ENCODE measurements at regions of chrX and their contacts with region 1.

Region 1: GRCh38 chrX:51860679-51861078 is 32.7 kb upstream of the MAGED1 start:
- DNase-seq: peak in 3 of 9 donors; percentile 2 to 3 (median 2)
- ATAC-seq: no peak
- H3K4me3 ChIP-seq: no peak overlapping the region
- H3K4me3 Mint-ChIP-seq: no peak overlapping the region
- H3K27ac ChIP-seq: no peak overlapping the region
- H3K27ac Mint-ChIP-seq: peak overlapping the region in 1 of 9 donors; percentile 23
- H3K4me1 ChIP-seq: no peaks in the 10 kb centered on the region
- H3K4me1 Mint-ChIP-seq: peaks cover 5 to 26% (median 11%) of the 10 kb centered on the region in 7 donors
- H3K27me3 ChIP-seq: no peaks in the 10 kb centered on the region
- H3K27me3 Mint-ChIP-seq: no peaks in the 10 kb centered on the region

Region 2: GRCh38 chrX:51487960-51488267 is 372.8 kb before region 1 on chrX:
- CTCF ChIA-PET with region 1: interaction called, 4 read pairs
- POLR2A ChIA-PET with region 1: no interaction called
- intact Hi-C with region 1: loop called in 1 of 2 experiments (anchors 5 kb)
- DNase-seq: no peak
- ATAC-seq: no peak
- H3K4me3 ChIP-seq: no peak overlapping the region
- H3K4me3 Mint-ChIP-seq: no peak overlapping the region
- H3K27ac ChIP-seq: no peak overlapping the region
- H3K27ac Mint-ChIP-seq: no peak overlapping the region
- H3K4me1 ChIP-seq: no peaks in the 10 kb centered on the region
- H3K4me1 Mint-ChIP-seq: no peaks in the 10 kb centered on the region
- H3K27me3 ChIP-seq: no peaks in the 10 kb centered on the region
- H3K27me3 Mint-ChIP-seq: no peaks in the 10 kb centered on the region

Region 3: DNA sequence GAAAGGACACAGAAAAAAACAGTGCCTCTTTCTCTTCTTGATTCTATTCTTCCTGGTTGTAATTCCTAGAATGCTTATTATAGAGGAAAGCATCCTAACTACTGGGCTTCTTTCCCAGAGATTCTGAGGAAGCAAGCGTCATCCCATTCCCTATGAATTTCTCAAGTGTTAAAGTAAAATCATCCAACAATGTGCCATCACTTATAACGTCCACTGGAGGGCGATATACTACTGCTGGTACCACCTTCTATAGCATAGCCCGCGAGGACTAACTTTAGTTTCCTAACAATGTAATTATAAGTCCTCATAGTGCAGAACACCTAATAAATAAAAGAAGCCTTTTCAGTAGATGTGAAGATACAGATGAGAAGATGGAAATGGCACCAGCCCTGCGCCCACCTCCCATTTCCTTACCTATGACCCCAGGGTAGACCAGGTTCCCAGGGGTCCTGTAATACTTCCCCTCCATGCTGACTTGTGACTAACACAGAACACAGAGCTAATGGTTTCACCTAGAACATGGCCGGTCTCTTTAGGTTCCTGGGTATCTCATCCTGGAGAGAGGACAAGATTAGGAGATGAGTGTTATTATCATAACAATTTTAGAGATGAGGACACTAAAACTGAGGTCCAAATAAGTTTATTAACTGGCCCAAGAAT is 246.2 kb before region 1 on chrX:
- CTCF ChIA-PET with region 1: no interaction called
- POLR2A ChIA-PET with region 1: no interaction called
- intact Hi-C with region 1: loop called in 1 of 2 experiments (anchors 2 kb)
- DNase-seq: peak in 5 of 9 donors; percentile 2 to 24 (median 18)
- ATAC-seq: no peak
- H3K4me3 ChIP-seq: no peak overlapping the region
- H3K4me3 Mint-ChIP-seq: no peak overlapping the region
- H3K27ac ChIP-seq: no peak overlapping the region
- H3K27ac Mint-ChIP-seq: no peak overlapping the region
- H3K4me1 ChIP-seq: no peaks in the 10 kb centered on the region
- H3K4me1 Mint-ChIP-seq: peaks cover 0 to 8% (median 3%) of the 10 kb centered on the region in 7 donors
- H3K27me3 ChIP-seq: no peaks in the 10 kb centered on the region
- H3K27me3 Mint-ChIP-seq: peaks cover 17 to 38% (median 30%) of the 10 kb centered on the region in 5 donors

Region 4: DNA sequence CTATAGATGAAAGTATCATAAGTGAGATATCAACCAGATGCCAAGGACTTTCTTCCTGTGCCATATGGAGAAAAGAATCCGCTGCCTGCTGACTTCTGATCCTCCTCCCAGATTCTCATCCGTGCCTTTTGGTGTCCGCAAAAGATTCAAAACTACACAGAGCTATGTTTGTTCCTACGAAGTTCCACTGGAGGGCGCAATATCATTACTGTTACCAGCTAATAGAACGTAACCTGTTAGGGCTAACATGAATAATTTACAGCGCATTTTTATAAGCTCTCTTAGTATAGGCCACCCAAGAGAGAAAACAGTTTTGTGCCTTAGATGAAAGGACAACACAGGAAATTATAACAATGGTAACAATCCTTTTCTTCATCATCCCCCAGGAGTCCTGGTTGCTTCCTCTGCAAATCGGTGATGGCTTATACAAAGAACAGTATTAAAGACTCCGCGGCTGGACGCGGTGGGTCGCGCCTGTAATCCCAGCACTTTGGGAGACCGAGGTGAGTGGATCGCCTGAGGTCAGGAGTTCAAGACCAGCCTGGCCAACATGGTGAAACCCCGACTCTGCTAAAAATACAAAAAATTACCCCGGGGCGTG is 219.2 kb before region 1 on chrX:
- CTCF ChIA-PET with region 1: no interaction called
- POLR2A ChIA-PET with region 1: no interaction called
- intact Hi-C with region 1: loop called (anchors 1 to 2 kb)
- DNase-seq: peak in 5 of 9 donors; percentile 0 to 23 (median 9)
- ATAC-seq: no peak
- H3K4me3 ChIP-seq: no peak overlapping the region
- H3K4me3 Mint-ChIP-seq: no peak overlapping the region
- H3K27ac ChIP-seq: no peak overlapping the region
- H3K27ac Mint-ChIP-seq: no peak overlapping the region
- H3K4me1 ChIP-seq: no peaks in the 10 kb centered on the region
- H3K4me1 Mint-ChIP-seq: peaks cover 0 to 4% (median 0%) of the 10 kb centered on the region in 7 donors
- H3K27me3 ChIP-seq: no peaks in the 10 kb centered on the region
- H3K27me3 Mint-ChIP-seq: peaks cover 7 to 35% (median 18%) of the 10 kb centered on the region in 5 donors

Measured in naive thymus-derived CD4-positive, alpha-beta T cell (primary cell).